ENCODE measurements at regions of chr2 and their contacts with region 1.

Region 1: DNA sequence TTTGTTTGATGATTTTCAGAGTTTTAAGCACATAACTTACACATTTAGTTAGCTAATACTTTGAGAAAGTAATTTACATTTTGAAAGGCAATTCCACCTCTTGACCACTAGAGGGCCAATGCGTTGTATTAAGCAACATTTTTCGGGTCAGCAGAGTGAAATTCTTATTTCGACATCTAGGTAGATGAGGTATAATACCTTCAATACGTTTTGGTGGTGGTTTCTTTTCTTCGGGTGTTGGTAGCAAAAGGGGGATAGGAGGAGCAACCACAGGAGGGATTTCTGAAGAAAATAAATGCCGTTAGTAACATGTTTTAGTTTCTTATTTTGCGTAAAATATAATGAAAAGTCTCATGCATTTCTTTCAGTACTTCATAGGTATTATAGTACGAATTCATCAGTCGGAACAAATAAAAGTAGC is 106.3 kb downstream of the TTN start:
- DNase-seq: peak; percentile 40
- CTCF ChIP-seq: peak; percentile 71

Region 2: DNA sequence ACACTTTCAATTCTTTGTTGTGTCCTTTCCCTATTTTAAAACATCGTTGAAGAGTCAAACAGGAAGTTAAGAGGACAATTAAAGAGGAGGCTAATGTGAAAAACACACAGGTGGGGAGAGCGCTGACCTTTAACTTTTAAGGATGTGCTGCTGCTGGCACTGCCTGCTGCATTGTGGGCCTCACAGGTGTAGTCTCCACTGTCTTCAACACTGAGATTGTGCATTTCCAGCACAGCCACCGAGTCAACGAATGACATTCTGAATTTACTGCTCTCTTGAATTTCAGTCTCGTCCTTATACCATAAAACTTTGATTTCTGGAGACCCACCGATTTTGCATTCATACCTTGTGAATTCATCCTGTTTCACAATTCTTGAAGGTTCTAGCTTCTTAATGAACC is 14.4 kb after region 1 on chr2:
- CTCF ChIA-PET with region 1: interaction called, 14 read pairs
- POLR2A ChIA-PET with region 1: no interaction called
- DNase-seq: no peak
- CTCF ChIP-seq: no peak

Region 3: DNA sequence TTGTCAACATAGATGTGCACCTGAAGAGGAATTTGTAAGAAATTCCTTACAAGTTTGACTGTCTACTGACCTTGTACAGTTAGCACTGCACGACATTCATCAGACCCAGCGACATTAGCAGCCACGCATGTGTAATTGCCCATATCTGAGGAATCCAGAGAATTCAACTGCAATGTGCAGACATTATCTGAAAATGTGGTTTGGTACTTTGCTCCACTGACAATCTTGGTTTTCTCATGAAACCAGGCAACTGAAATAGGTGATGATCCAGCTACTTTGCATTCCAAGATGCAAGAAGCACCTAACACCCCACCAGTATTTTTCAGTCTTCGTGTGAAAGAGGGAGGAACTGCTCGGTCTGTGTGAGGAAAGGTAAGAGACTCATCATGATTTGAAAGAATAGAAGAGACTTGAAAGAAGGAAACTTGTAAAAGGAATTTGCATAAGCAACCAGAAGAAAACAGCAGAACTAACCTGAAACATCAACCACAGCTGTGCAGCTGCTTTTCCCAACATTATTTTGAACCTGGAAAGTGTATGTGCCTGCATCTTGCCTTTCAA is 22.9 kb after region 1 on chr2:
- CTCF ChIA-PET with region 1: interaction called, 13 read pairs
- POLR2A ChIA-PET with region 1: no interaction called
- DNase-seq: no peak
- CTCF ChIP-seq: no peak

Region 4: DNA sequence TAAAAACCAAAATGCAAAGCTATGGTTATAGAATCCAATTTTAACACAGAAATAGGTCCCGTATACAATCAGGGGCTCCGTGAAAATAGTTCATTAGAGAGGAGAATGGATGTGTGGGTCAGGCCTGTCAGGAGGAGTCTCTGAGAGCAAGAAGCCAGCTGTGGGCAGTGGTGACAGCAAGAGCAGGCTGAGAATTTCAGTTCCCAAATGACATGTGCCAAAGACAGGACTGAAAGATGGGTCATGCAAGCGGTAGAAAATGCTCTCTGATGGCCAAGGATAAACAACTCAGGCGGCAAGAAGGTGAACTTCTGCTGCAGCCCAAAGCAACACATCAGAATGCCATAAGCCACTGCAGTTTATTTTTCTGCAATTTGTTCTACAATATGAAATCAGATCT is 248.7 kb after region 1 on chr2:
- CTCF ChIA-PET with region 1: no interaction called
- POLR2A ChIA-PET with region 1: no interaction called
- DNase-seq: no peak
- CTCF ChIP-seq: no peak